Posterior vena cava (tissue), 2 donors: ENCODE measurements at regions of chr12 and their contacts with region 1.

Region 1: DNA sequence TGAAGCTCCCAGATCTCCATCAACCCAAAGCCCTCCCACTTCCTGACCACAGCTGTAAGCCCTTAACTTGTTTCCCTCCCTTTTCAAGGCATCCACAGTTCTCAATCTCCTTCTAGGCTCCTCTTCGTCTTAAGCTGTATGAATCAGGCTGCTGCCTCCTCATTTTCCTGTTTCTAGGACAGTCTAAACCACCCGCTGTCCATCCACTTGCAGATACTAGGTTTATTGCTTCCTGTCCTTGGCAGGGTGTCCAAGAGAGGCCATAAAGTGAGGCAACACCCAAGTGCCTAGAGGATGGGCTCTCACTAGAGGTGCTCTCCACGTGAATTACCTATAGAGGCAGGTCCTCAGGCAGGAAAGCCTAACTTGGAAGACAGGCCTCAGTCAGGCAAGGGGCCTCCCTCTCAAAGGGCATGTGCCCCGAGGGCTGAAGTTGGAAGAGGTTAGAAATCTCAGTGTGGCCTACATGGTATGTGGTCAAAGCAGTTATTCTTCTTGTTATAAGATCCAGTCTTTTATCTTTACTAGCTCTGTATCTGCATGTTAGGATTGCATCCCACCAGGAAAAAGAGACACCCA is 8.8 kb upstream of the TMEM106C start:
- DNase-seq: no peak

Region 2: GRCh38 chr12:48779869-48780268 is 825.3 kb after region 1 on chr12:
- intact Hi-C with region 1: loop called in 1 of 2 experiments (anchors 5 kb)
- DNase-seq: peak; percentile 89